ENCODE measurements at regions of chr9 and their contacts with region 1.

Region 1: DNA sequence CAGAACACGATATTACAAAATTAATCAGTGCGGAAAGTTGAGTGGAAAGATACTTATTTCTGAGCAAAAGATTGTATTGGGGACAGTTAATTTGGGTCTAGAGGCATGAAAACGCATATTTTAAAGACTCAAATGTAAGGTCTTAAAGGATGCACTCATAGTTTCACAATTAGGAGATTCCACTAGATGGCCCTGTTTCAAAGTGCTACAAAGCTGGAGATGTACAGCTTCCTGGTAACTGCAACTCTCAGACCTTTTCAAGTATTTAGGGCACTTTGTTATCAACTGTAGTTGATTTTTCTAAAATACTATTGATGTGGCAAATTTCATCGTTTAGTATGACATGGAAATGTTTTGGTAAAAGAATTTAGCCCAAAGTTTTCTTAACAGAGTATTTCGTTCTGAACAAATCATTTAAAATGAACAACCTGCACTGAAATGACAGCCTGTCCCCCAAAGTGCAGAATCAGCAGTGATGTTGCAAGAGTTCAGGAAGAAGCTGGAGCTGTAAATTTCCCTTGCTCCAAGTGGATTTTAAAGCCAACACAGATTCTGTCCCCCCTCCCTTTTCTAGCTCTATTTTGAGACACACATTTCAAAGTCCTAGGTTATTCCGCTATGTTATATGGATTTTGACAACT is 16.2 kb upstream of the NDUFB6 start:
- DNase-seq: no peak
- H3K4me3 ChIP-seq: no peak overlapping the region
- H3K27ac ChIP-seq: no peak overlapping the region
- H3K4me1 ChIP-seq: no peaks in the 10 kb centered on the region
- H3K27me3 ChIP-seq: no peaks in the 10 kb centered on the region
- CTCF ChIP-seq: peak in 2 of 3 experiments; percentile 50 to 54; a peak in 3 of 4 replicates
- EP300 ChIP-seq: no peak
- POLR2A ChIP-seq: no peak
- RAD21 ChIP-seq: peak; percentile 64 to 74

Region 2: GRCh38 chr9:32703635-32704034 is 114.4 kb after region 1 on chr9:
- CTCF ChIA-PET with region 1: interaction called, 26 read pairs
- POLR2A ChIA-PET with region 1: no interaction called
- DNase-seq: no peak
- H3K4me3 ChIP-seq: no peak overlapping the region
- H3K27ac ChIP-seq: no peak overlapping the region
- H3K4me1 ChIP-seq: no peaks in the 10 kb centered on the region
- H3K27me3 ChIP-seq: no peaks in the 10 kb centered on the region
- CTCF ChIP-seq: peak; percentile 46 to 70 (median 59)
- EP300 ChIP-seq: no peak
- POLR2A ChIP-seq: no peak
- RAD21 ChIP-seq: peak; percentile 56 to 61

Region 3: GRCh38 chr9:32968101-32969011 is 379.2 kb after region 1 on chr9:
- CTCF ChIA-PET with region 1: interaction called, 48 read pairs
- POLR2A ChIA-PET with region 1: interaction called, 3 read pairs
- DNase-seq: peak in 1 of 2 experiments; percentile 81
- H3K4me3 ChIP-seq: no peak overlapping the region
- H3K27ac ChIP-seq: no peak overlapping the region
- H3K4me1 ChIP-seq: peaks cover 0 to 3% (median 0%) of the 10 kb centered on the region in 4 experiments; a peak in 1 of 7 replicates
- H3K27me3 ChIP-seq: no peaks in the 10 kb centered on the region
- CTCF ChIP-seq: peak in 2 of 3 experiments; percentile 55 to 61; a peak in 3 of 4 replicates
- EP300 ChIP-seq: no peak
- POLR2A ChIP-seq: no peak
- RAD21 ChIP-seq: peak; percentile 77 to 79